ENCODE measurements at regions of chr21 and their contacts with region 1.

Region 1: GRCh38 chr21:31110430-31110829 is 72.2 kb upstream of the KRTAP19-8 start:
- DNase-seq: no peak
- ATAC-seq: no peak
- H3K4me3 ChIP-seq: no peak overlapping the region
- H3K27ac ChIP-seq: no peak overlapping the region
- H3K4me1 ChIP-seq: no peaks in the 10 kb centered on the region
- H3K27me3 ChIP-seq: no peaks in the 10 kb centered on the region

Region 2: GRCh38 chr21:31078216-31078615 is 32.2 kb before region 1 on chr21:
- intact Hi-C with region 1: no loop called
- DNase-seq: no peak
- ATAC-seq: no peak
- H3K4me3 ChIP-seq: no peak overlapping the region
- H3K27ac ChIP-seq: no peak overlapping the region
- H3K4me1 ChIP-seq: no peaks in the 10 kb centered on the region
- H3K27me3 ChIP-seq: no peaks in the 10 kb centered on the region

Region 3: GRCh38 chr21:31088315-31088714 is 22.1 kb before region 1 on chr21:
- intact Hi-C with region 1: loop called in 1 of 2 experiments (anchors 2 kb)
- DNase-seq: no peak
- ATAC-seq: no peak
- H3K4me3 ChIP-seq: no peak overlapping the region
- H3K27ac ChIP-seq: no peak overlapping the region
- H3K4me1 ChIP-seq: no peaks in the 10 kb centered on the region
- H3K27me3 ChIP-seq: no peaks in the 10 kb centered on the region

Region 4: GRCh38 chr21:31201548-31201947 is 91.1 kb after region 1 on chr21:
- intact Hi-C with region 1: no loop called
- DNase-seq: peak in 1 of 2 donors; percentile 65
- ATAC-seq: peak; percentile 89
- H3K4me3 ChIP-seq: no peak overlapping the region
- H3K27ac ChIP-seq: no peak overlapping the region
- H3K4me1 ChIP-seq: no peaks in the 10 kb centered on the region
- H3K27me3 ChIP-seq: no peaks in the 10 kb centered on the region